Activated naive CD4-positive, alpha-beta T cell treated with anti-CD3 and anti-CD28 coated beads for 36 hours (primary cell): ENCODE measurements at regions of chr3 and their contacts with region 1.

Region 1: GRCh38 chr3:41198950-41199865 is at the start of gene CTNNB1:
- DNase-seq: peak; percentile 87
- H3K4me3 Mint-ChIP-seq: peak within 1 kb of the TSS; percentile 90
- H3K27ac Mint-ChIP-seq: peak within 1 kb of the TSS; percentile 92
- H3K4me1 Mint-ChIP-seq: peaks cover 28% of the 10 kb centered on the region
- H3K27me3 Mint-ChIP-seq: peaks cover 3% of the 10 kb centered on the region
- total RNA-seq, gene CTNNB1: 106 to 115 TPM

Region 2: DNA sequence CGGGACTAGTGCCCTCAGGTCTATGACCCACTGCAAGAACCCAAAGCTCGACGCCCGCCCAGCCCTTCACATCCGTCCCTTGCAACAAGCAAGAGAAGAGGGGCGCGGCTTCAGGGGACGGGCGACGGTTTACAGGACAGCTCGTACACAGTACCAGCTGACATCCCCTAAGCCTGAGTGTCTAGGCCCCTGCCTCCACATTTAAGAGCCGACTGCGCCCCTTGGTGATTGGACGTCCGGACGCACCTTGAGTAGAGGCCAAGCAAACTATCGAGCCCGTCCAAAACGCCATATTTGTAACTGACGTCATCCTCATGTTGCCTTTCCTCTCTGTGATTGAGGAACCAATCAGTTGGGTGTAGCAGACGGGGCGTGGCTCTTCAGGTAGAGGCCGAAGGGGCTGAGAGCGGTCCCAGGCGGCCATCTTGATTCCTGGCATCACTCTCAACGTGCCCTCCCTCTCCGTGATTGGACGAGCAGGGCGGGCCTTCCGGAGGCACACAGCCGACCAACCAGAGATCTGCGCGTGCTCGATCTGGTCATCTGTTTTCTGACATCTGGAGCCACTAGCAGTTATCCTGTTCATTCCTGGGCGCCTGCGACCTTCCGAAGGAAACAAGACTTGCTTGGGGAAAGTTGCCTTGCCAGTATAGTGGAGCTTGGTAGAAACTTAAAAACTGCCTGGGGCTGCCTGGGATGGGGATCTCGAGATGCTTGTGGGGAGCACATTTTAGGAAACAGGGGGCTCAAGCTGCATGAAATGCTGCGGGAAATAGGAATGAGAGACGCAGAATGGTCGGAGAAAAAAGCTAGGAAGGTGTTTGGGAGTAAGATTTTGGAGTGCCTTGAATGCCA is 746.1 kb before region 1 on chr3:
- CTCF ChIA-PET with region 1: no interaction called
- intact Hi-C with region 1: loop called (anchors 1 kb)
- DNase-seq: peak; percentile 98
- H3K4me3 Mint-ChIP-seq: peak overlapping the region; percentile 93
- H3K27ac Mint-ChIP-seq: peak overlapping the region; percentile 92
- H3K4me1 Mint-ChIP-seq: peaks cover 26% of the 10 kb centered on the region
- H3K27me3 Mint-ChIP-seq: no peaks in the 10 kb centered on the region

Region 3: GRCh38 chr3:40985194-40985593 is 214.0 kb before region 1 on chr3:
- CTCF ChIA-PET with region 1: no interaction called
- intact Hi-C with region 1: loop called (anchors 2 kb)
- DNase-seq: no peak
- H3K4me3 Mint-ChIP-seq: no peak overlapping the region
- H3K27ac Mint-ChIP-seq: no peak overlapping the region
- H3K4me1 Mint-ChIP-seq: peaks cover 8% of the 10 kb centered on the region
- H3K27me3 Mint-ChIP-seq: peaks cover 37% of the 10 kb centered on the region

Region 4: DNA sequence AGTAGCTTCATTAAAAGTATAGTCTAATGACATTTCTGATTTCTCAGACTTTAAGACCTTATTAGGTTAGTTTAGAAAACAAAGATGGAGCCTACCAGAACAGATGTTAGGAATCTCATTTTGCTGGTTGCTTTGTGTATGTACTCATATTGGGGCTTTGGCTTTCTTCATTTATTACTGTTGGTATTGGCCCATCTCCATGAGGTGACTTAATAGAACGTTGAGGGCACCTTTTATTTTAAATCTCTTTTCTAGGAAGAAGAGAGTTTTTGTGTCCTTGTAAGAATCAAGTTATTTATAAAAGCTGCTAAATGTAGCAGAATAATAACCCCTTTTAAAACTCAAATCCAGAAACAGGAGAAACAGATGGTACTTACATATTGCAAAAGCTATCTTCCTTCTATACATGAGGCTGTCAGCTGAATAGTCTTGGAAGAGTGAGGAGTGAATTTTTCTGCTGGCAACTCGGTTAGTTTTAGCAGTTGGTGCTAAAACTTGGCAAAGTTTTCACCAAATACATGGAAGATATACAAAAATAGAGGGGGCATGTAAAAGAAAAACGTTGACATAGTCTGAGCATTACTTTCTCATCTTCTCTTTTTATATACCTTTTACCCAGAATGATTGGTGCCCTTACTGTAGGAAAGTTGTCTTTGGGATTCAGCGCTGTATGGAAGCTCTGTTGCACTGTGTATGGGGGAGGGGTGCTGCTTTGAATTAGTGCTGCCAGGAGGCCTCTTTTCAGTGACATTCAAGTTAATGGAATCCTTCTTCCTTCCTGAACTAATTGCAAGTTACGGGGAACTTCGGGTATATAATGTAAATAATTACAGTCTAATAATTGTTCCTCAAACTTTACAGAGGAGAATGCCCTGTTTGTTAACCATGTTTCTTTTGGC is 35.9 kb after region 1 on chr3:
- CTCF ChIA-PET with region 1: interaction called, 5 read pairs
- intact Hi-C with region 1: loop called (anchors 5 kb)
- DNase-seq: no peak
- H3K4me3 Mint-ChIP-seq: no peak overlapping the region
- H3K27ac Mint-ChIP-seq: no peak overlapping the region
- H3K4me1 Mint-ChIP-seq: peaks cover 9% of the 10 kb centered on the region
- H3K27me3 Mint-ChIP-seq: no peaks in the 10 kb centered on the region

Region 5: GRCh38 chr3:42012935-42013690 is 813.9 kb after region 1 on chr3:
- CTCF ChIA-PET with region 1: no interaction called
- intact Hi-C with region 1: loop called (anchors 10 kb)
- DNase-seq: peak; percentile 77
- H3K4me3 Mint-ChIP-seq: peak overlapping the region; percentile 86
- H3K27ac Mint-ChIP-seq: peak overlapping the region; percentile 87
- H3K4me1 Mint-ChIP-seq: peaks cover 47% of the 10 kb centered on the region
- H3K27me3 Mint-ChIP-seq: no peaks in the 10 kb centered on the region